ENCODE measurements at regions of chr10 and their contacts with region 1.

Region 1: DNA sequence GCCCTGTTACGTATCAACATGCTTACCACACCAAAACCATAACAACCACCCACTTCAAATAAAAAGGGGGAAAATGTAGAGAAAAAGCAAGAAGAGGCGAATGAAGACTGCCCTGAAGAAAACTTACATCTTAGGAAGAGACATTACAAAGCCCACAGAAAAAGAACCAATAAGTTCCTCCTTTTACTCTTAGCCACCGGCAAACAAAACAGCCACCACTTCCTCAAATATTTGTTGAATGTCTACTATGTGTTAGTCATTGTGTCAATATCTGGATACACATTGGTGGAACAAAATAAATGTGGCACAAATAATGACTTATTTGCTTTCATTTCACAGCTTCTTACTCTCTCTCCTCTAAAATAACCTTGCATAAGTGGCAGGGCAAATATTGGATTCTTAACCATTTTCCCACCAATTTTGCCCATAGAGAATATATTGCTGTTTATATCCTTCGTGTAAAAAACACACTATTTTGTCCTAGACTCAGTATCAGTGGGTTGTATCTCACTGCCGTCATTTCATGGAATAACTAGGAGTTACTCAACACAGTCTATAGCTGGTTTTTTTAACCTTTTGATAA is 106.8 kb downstream of the ANK3 start:
- DNase-seq: peak in 1 of 2 experiments; percentile 68
- H3K4me3 ChIP-seq: no peak overlapping the region
- H3K4me3 Mint-ChIP-seq: peak overlapping the region; percentile 33
- H3K27ac Mint-ChIP-seq: peak overlapping the region; percentile 68
- H3K4me1 ChIP-seq: peaks cover 42% of the 10 kb centered on the region
- H3K4me1 Mint-ChIP-seq: peaks cover 35% of the 10 kb centered on the region
- H3K27me3 ChIP-seq: no peaks in the 10 kb centered on the region
- H3K27me3 Mint-ChIP-seq: no peaks in the 10 kb centered on the region
- CTCF ChIP-seq: no peak

Region 2: DNA sequence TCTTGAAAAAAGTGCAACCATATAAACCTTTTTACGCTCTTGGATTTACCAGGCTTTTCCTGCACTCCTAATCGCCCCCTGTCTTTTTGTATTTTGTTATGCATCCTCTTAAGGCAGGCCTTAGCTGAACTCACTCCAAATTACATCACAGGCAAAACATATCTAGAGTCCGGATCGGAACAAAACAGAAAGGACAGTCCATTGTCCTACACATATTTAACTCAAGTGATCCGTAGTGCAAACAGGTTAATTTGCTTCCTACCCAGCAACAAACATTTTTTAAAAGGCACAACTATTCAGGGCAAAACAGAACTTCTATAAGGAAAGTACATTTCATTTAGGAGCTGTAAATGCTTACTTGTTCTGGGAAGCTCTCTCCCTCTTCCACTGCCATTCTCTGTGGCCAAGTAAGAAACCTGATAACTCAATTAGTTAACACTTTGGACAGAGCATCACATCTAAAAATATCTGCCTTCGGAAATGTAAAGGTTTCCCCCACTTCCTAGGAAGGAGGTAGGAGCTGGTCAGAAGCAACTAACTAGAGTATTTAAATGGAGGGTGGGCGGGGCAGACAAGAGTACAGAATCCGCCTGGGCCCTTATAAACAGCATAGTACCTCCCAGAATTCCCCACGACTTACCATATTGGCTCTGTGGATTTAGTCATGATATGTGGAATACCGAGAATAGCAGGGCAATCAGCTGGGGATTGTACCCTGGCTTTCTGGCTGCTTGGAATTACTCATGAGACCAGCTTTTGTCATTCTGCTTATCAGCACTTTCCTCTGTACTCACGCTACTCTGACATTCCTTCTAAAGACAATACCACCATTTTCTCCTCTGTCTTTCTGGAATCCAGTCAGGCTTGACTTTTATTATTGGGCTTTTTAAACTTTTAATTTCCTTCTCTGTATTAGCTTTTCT is 17.4 kb after region 1 on chr10:
- CTCF ChIA-PET with region 1: no interaction called
- POLR2A ChIA-PET with region 1: no interaction called
- intact Hi-C with region 1: loop called (anchors 1 kb)
- DNase-seq: peak; percentile 66 to 75
- H3K4me3 ChIP-seq: no peak overlapping the region
- H3K4me3 Mint-ChIP-seq: peak overlapping the region; percentile 54
- H3K27ac Mint-ChIP-seq: peak overlapping the region; percentile 71
- H3K4me1 ChIP-seq: peaks cover 18% of the 10 kb centered on the region
- H3K4me1 Mint-ChIP-seq: peaks cover 20% of the 10 kb centered on the region
- H3K27me3 ChIP-seq: no peaks in the 10 kb centered on the region
- H3K27me3 Mint-ChIP-seq: no peaks in the 10 kb centered on the region
- CTCF ChIP-seq: no peak

Region 3: DNA sequence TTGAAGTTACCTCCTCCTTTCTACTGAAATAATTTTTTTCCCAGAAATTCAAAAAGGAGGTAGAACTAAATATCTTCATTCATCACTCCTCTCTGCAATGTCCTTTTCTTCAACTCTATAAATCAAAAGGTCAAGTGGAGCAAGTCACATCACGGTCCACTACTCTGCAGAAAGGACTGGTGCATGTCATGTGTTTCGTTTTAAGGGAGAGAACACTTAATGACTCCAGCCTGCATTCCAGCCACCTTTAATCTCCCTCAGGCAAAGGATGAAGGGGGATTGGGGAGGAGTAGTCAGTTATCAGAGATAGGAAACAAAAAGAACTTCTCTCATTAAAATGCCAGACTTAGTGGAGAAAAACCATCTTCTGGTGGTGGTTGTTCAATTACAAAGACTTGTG is 27.9 kb after region 1 on chr10:
- CTCF ChIA-PET with region 1: no interaction called
- POLR2A ChIA-PET with region 1: no interaction called
- intact Hi-C with region 1: loop called (anchors 2 kb)
- DNase-seq: peak; percentile 50 to 65
- H3K4me3 ChIP-seq: no peak overlapping the region
- H3K4me3 Mint-ChIP-seq: no peak overlapping the region
- H3K27ac Mint-ChIP-seq: no peak overlapping the region
- H3K4me1 ChIP-seq: peaks cover 25% of the 10 kb centered on the region
- H3K4me1 Mint-ChIP-seq: peaks cover 39% of the 10 kb centered on the region
- H3K27me3 ChIP-seq: no peaks in the 10 kb centered on the region
- H3K27me3 Mint-ChIP-seq: no peaks in the 10 kb centered on the region
- CTCF ChIP-seq: no peak